ENCODE measurements at regions of chr3 and their contacts with region 1.

Region 1: GRCh38 chr3:22966349-22966748 is 236.8 kb upstream of the UBE2E2 start:
- DNase-seq: no peak
- ATAC-seq: no peak
- H3K4me3 ChIP-seq: no peak overlapping the region
- H3K27ac ChIP-seq: no peak overlapping the region
- H3K4me1 ChIP-seq: no peaks in the 10 kb centered on the region
- H3K27me3 ChIP-seq: no peaks in the 10 kb centered on the region
- CTCF ChIP-seq: no peak
- POLR2A ChIP-seq: no peak

Region 2: DNA sequence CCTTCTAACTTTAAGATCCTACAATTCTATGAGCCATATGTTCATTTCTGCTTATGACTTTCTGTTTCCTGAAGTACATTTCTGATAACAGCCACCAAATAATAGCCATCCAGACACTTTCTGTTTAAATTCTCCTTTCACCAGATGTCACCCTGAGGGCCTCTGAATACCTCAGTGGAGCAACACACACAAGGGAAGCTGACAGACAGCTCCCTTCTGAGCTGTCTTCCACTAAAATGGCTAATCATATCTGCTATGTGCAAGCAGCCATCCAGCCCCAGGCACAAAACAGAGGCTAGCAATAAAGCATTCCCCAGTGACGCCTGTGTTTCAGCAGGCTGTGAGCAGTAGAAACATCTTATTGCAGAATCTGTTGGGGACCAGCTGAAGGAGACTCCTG is 429.8 kb before region 1 on chr3:
- intact Hi-C with region 1: no loop called
- DNase-seq: no peak
- ATAC-seq: no peak
- H3K4me3 ChIP-seq: no peak overlapping the region
- H3K27ac ChIP-seq: no peak overlapping the region
- H3K4me1 ChIP-seq: no peaks in the 10 kb centered on the region
- H3K27me3 ChIP-seq: no peaks in the 10 kb centered on the region
- CTCF ChIP-seq: no peak
- POLR2A ChIP-seq: no peak

Region 3: DNA sequence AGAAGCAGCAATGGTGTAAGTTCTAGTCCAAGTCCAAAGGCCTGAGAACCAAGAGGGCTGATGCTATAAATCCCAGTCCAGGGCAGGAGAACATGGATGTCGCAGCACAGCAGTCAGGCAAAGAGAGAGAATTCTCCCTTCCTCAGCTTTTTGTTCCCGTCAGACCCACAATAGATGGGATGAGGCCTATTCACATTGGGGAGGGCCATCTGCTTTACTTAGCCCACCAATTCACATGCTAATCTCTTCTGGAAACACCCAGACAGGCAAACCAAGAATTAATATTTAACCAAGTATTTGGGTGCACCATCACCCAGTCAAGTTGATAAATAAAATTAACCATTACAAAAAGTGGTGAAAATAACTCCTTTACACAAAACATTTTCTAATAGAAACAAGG is 274.9 kb before region 1 on chr3:
- intact Hi-C with region 1: no loop called
- DNase-seq: no peak
- ATAC-seq: no peak
- H3K4me3 ChIP-seq: no peak overlapping the region
- H3K27ac ChIP-seq: no peak overlapping the region
- H3K4me1 ChIP-seq: no peaks in the 10 kb centered on the region
- H3K27me3 ChIP-seq: no peaks in the 10 kb centered on the region
- CTCF ChIP-seq: no peak
- POLR2A ChIP-seq: no peak

Region 4: GRCh38 chr3:22734756-22735155 is 231.6 kb before region 1 on chr3:
- intact Hi-C with region 1: loop called in 1 of 10 experiments (anchors 5 kb)
- DNase-seq: no peak
- ATAC-seq: no peak
- H3K4me3 ChIP-seq: no peak overlapping the region
- H3K27ac ChIP-seq: no peak overlapping the region
- H3K4me1 ChIP-seq: no peaks in the 10 kb centered on the region
- H3K27me3 ChIP-seq: no peaks in the 10 kb centered on the region
- CTCF ChIP-seq: no peak
- POLR2A ChIP-seq: no peak

Region 5: GRCh38 chr3:23129817-23130216 is 163.5 kb after region 1 on chr3:
- intact Hi-C with region 1: no loop called
- DNase-seq: no peak
- ATAC-seq: no peak
- H3K4me3 ChIP-seq: peak overlapping the region in 1 of 12 donors; percentile 20
- H3K27ac ChIP-seq: no peak overlapping the region
- H3K4me1 ChIP-seq: peaks cover 0 to 15% (median 5%) of the 10 kb centered on the region in 12 donors
- H3K27me3 ChIP-seq: no peaks in the 10 kb centered on the region
- CTCF ChIP-seq: no peak
- POLR2A ChIP-seq: no peak

Measured in heart left ventricle (tissue), 16 donors.